ENCODE measurements at regions of chr16 and their contacts with region 1.

Region 1: DNA sequence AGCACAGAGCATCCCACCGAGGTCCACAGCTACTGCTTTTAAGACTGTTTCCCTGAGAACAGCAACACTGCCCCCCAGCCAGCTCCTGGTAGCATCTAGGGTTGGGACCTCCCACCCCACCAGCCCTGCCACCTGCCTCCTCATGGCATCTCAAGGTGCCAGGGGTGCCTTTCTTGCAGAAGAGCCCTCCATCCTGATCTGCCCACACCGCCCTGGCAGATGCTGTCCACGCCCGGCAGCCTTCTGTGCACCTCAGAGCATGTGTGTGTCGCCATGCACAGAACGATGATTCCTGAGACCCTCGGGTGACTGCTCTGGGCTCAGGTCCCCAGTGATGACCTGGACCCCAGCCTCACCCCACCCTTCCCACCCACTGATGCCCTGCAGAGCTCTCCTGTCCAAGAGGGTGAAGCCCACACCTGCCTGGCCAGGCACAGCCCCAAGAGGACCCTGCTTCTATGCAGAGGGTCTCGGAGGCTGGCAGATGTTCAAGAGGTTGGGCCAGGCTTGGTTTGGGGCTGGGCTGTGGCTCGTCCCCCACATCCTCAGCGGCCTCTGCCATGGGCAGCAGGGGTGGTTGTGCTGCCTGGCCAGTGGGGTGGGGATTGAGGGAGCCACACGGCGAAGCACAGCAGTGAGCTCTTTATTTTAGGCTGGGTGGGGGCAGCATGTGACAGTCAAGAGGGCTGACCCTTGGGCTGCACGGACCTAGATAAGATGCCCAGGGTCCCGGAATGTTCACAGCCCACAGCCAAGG is 5.2 kb upstream of the SPATA2L start:
- DNase-seq: no peak
- ATAC-seq: no peak
- H3K4me3 Mint-ChIP-seq: peak overlapping the region in 1 of 10 donors; percentile 44
- H3K27ac Mint-ChIP-seq: peak overlapping the region in 1 of 10 donors; percentile 48
- H3K4me1 Mint-ChIP-seq: peaks cover 8 to 17% (median 12%) of the 10 kb centered on the region in 4 donors
- H3K27me3 Mint-ChIP-seq: no peaks in the 10 kb centered on the region

Region 2: GRCh38 chr16:89737341-89738071 is 30.8 kb after region 1 on chr16:
- POLR2A ChIA-PET with region 1: interaction called, 12 read pairs
- DNase-seq: peak in 8 of 10 donors; percentile 37 to 79 (median 58)
- ATAC-seq: peak; percentile 72 to 88
- H3K4me3 Mint-ChIP-seq: peak overlapping the region; percentile 26 to 83 (median 54)
- H3K27ac Mint-ChIP-seq: peak overlapping the region; percentile 60 to 92 (median 82)
- H3K4me1 Mint-ChIP-seq: peaks cover 17 to 75% (median 33%) of the 10 kb centered on the region in 4 donors
- H3K27me3 Mint-ChIP-seq: no peaks in the 10 kb centered on the region

Region 3: GRCh38 chr16:89791278-89791995 is 84.8 kb after region 1 on chr16:
- POLR2A ChIA-PET with region 1: interaction called, 23 read pairs
- DNase-seq: no peak
- ATAC-seq: no peak
- H3K4me3 Mint-ChIP-seq: no peak overlapping the region
- H3K27ac Mint-ChIP-seq: peak overlapping the region in 1 of 10 donors; percentile 20
- H3K4me1 Mint-ChIP-seq: peaks cover 4 to 22% (median 17%) of the 10 kb centered on the region in 4 donors
- H3K27me3 Mint-ChIP-seq: peaks cover 0 to 2% (median 0%) of the 10 kb centered on the region in 5 donors

Region 4: GRCh38 chr16:89860747-89861304 is 154.1 kb after region 1 on chr16:
- POLR2A ChIA-PET with region 1: interaction called, 19 read pairs
- DNase-seq: peak; percentile 63 to 85 (median 74)
- ATAC-seq: peak; percentile 84 to 89
- H3K4me3 Mint-ChIP-seq: peak overlapping the region in 2 of 10 donors; percentile 17 to 34
- H3K27ac Mint-ChIP-seq: peak overlapping the region in 6 of 10 donors; percentile 8 to 85 (median 72)
- H3K4me1 Mint-ChIP-seq: peaks cover 18 to 40% (median 36%) of the 10 kb centered on the region in 4 donors
- H3K27me3 Mint-ChIP-seq: no peaks in the 10 kb centered on the region

Region 5: GRCh38 chr16:89873972-89874689 is 167.4 kb after region 1 on chr16:
- POLR2A ChIA-PET with region 1: interaction called, 23 read pairs
- DNase-seq: peak; percentile 89 to 96 (median 92)
- ATAC-seq: peak; percentile 70 to 82
- H3K4me3 Mint-ChIP-seq: peak overlapping the region; percentile 83 to 96 (median 91)
- H3K27ac Mint-ChIP-seq: peak overlapping the region; percentile 63 to 99 (median 98)
- H3K4me1 Mint-ChIP-seq: peaks cover 3 to 26% (median 21%) of the 10 kb centered on the region in 4 donors
- H3K27me3 Mint-ChIP-seq: no peaks in the 10 kb centered on the region

Measured in naive thymus-derived CD8-positive, alpha-beta T cell (primary cell).